CD4-positive, alpha-beta T cell (primary cell): ENCODE measurements at regions of chr19 and their contacts with region 1.

Region 1: DNA sequence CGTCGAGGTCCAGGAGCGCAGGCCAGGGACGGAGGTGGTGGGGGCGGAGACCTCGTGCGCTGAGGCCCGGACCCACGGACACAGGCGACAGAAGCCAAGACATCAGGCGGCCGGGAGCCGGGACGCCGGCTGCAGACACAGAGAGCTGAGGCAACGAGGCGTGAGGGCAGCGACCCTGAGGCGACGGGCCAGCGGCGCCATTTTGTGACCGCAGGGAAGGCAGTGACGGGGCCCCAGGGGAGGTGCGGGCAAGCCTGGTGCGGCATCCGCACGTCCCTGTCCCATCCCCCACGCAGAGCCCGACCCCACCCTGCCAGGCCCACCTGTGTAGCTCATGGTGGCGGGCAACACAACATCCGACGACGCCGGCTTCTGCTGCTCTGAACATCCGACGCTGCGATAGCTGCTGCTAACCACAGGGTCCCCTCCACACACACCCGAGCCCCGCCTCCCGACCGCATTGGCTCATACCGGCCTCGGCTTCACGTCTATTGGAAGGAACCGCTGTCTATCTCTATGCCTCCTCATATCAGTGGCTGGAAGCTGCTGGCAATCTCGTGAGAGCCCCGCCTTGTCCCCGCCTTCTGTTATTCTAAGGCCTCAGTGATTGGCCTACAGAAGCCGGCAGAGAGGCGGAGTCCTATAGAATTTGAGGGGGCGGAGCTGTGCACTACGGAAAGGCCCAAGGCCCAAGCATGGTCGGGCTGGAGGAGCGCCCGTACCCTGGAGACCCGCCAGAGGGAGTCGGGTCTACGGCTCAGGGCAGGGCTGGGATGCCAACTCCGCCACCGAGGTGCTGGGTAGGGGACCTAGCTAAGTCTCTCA is at the start of gene AKAP8L:
- DNase-seq: peak; percentile 94 to 100 (median 98)
- ATAC-seq: peak; percentile 92
- H3K4me3 ChIP-seq: peak within 1 kb of the TSS; percentile 94
- H3K4me3 Mint-ChIP-seq: peak within 1 kb of the TSS; percentile 94
- H3K27ac ChIP-seq: peak within 1 kb of the TSS; percentile 53 to 83
- H3K27ac Mint-ChIP-seq: peak within 1 kb of the TSS; percentile 92
- H3K4me1 ChIP-seq: peaks cover 40% of the 10 kb centered on the region
- H3K4me1 Mint-ChIP-seq: peaks cover 46% of the 10 kb centered on the region
- H3K27me3 ChIP-seq: no peaks in the 10 kb centered on the region
- H3K27me3 Mint-ChIP-seq: no peaks in the 10 kb centered on the region
- CTCF ChIP-seq: peak; percentile 85
- total RNA-seq, gene AKAP8L: 157 to 162 TPM

Region 2: DNA sequence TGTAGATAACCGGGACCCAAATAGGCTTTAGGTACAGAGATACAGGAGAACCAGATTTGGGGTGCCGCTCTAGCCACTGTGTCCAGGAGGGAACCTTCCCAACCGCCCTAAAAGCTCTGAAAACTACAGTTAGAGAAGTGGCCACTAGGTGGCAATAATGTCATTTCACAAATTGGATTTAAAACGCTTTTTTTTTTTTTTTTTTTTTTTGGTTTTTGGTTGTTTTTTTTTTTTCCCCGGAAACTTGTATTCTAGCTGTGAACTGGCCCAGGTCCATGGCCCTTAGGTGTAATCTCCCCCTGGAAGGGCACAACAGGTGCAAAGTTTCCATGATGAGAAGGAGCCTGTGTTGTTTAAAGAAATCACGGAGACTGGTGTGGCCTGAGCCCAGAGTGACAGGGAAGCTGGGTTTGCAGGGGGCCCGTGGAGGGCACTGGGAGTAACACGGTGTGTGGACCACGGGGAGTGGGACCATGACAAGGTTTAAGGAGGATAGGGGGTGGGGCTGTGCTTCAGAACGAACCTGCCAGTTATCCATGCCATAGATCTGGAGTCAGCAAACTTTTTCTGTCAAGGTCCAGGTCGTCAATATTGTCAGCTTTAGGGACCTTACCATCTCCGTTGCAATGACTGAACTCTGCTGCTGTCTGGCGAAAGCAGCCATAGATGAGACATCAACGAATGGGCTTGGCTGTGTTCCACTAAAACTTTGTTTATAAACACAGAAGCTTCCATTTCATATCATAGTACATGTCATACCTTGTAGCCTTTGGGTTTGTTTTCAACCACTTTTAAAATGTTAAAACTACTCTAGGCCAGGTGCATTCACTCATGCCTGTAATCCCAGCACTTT is 326.7 kb before region 1 on chr19:
- CTCF ChIA-PET with region 1: interaction called, 10 read pairs
- POLR2A ChIA-PET with region 1: interaction called, 11 read pairs
- intact Hi-C with region 1: loop called in 1 of 2 experiments (anchors 2 kb)
- DNase-seq: peak in 13 of 14 experiments; percentile 9 to 86 (median 37)
- ATAC-seq: peak; percentile 73
- H3K4me3 ChIP-seq: no peak overlapping the region
- H3K4me3 Mint-ChIP-seq: peak overlapping the region; percentile 13
- H3K27ac ChIP-seq: no peak overlapping the region
- H3K27ac Mint-ChIP-seq: peak overlapping the region; percentile 56
- H3K4me1 ChIP-seq: peaks cover 8% of the 10 kb centered on the region
- H3K4me1 Mint-ChIP-seq: peaks cover 8% of the 10 kb centered on the region
- H3K27me3 ChIP-seq: peaks cover 0 to 13% of the 10 kb centered on the region in 2 experiments
- H3K27me3 Mint-ChIP-seq: peaks cover 10% of the 10 kb centered on the region
- CTCF ChIP-seq: peak; percentile 78

Region 3: DNA sequence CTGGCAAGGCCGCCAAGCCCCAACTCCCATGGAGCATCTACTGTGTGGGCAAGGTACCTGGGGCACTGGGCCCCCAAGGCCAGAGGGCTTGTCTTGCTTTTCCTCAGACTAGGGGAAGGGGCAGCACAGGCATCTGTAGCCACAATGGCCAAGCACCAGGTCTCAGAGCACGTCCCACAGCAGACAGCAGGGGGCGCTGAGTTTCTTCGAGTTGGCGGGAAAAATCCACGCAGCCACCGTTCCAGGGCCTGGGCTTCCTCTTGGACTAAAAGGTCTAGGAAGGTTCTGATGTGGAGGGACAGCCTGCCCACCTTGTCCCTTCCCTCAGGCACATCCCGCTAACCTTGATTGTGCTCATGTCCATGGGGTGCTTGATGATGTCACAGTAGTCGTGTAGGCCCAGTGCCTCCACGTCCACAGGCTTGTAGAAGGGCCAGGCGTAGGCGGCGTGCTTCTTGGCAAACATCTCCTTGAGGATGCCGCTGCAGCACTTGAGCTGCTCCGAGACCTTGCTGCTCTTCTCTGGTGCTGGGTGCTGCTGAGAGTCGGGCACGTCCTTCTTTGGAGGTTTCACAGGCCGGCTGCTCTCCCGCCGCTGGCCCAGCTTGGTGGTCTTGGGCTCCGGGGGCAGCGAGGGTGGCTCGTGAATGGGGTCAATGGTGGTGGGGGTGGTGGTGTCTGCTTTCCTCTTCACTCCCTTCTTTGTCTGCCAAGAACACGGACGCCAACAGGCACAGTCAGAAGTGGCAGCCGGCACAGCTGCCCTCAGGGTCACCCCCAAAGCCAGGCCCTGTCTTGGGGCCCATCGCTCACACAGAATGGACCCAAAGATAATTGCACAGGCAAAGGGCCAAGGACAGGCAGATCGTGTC is 154.5 kb before region 1 on chr19:
- CTCF ChIA-PET with region 1: no interaction called
- POLR2A ChIA-PET with region 1: no interaction called
- intact Hi-C with region 1: loop called (anchors 1 to 5 kb)
- DNase-seq: peak; percentile 58 to 82 (median 66)
- ATAC-seq: peak; percentile 80
- H3K4me3 ChIP-seq: no peak overlapping the region
- H3K4me3 Mint-ChIP-seq: no peak overlapping the region
- H3K27ac ChIP-seq: no peak overlapping the region
- H3K27ac Mint-ChIP-seq: no peak overlapping the region
- H3K4me1 ChIP-seq: no peaks in the 10 kb centered on the region
- H3K4me1 Mint-ChIP-seq: peaks cover 13% of the 10 kb centered on the region
- H3K27me3 ChIP-seq: no peaks in the 10 kb centered on the region
- H3K27me3 Mint-ChIP-seq: no peaks in the 10 kb centered on the region
- CTCF ChIP-seq: peak; percentile 75

Region 4: DNA sequence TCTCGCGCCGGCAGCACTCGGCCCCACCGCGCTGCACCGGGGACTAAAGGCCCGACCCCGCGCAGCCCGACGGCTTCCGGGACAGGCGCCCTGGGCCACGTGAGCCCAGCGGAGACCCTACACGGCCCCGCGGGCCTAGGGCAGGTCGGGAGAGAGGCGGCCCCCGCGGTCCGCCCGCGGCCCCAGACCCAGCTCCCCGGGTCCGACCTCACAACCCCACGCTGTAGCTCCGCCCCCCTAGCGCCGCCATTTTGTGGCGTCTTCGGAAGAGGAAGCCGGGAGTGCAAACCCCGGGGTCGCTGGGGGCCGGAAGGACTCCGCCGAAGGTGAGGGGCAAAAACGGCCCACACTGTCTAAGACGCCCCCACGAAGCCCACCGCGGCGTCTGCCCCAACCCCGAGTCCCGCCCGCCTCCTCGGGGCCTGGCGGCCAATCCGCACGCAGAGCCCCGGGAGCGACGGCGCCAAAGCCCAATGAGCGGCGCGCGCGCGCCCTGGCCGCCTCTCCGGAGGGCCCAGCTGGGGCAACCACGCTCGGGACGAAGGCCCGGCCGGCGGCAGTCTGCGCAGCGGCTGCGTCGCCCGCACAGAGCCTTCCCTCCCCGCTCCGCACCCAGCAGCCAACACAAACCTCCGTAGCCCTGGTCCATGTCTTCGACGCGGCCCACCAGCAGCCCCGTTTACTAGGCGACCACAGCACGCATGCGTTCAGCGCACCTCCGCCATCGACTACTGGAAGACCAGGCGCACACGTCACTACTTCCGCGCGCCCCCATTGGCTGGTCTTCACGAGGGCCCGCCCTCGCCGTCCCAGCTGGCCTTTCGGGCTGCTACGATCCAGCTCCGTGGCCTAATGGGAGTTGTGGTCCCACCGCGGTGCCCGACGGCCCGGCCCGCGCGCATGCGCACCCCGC is 39.5 kb before region 1 on chr19 and contains the start of gene AKAP8:
- CTCF ChIA-PET with region 1: interaction called, 34 read pairs
- POLR2A ChIA-PET with region 1: interaction called, 208 read pairs
- intact Hi-C with region 1: loop called (anchors 1 kb)
- DNase-seq: peak; percentile 96 to 100 (median 98)
- ATAC-seq: peak; percentile 90
- H3K4me3 ChIP-seq: peak within 1 kb of the TSS; percentile 75
- H3K4me3 Mint-ChIP-seq: peak within 1 kb of the TSS; percentile 100
- H3K27ac ChIP-seq: peak within 1 kb of the TSS; percentile 96
- H3K27ac Mint-ChIP-seq: peak within 1 kb of the TSS; percentile 97
- H3K4me1 ChIP-seq: peaks cover 35% of the 10 kb centered on the region
- H3K4me1 Mint-ChIP-seq: peaks cover 48% of the 10 kb centered on the region
- H3K27me3 ChIP-seq: no peaks in the 10 kb centered on the region
- H3K27me3 Mint-ChIP-seq: no peaks in the 10 kb centered on the region
- CTCF ChIP-seq: no peak
- total RNA-seq, gene AKAP8: 87.5 to 90.1 TPM

Region 5: GRCh38 chr19:15432629-15433518 is 14.1 kb after region 1 on chr19:
- CTCF ChIA-PET with region 1: interaction called, 20 read pairs
- POLR2A ChIA-PET with region 1: interaction called, 62 read pairs
- intact Hi-C with region 1: loop called (anchors 1 to 2 kb)
- DNase-seq: peak; percentile 85 to 97 (median 92)
- ATAC-seq: peak; percentile 94
- H3K4me3 ChIP-seq: peak overlapping the region; percentile 87
- H3K4me3 Mint-ChIP-seq: peak overlapping the region; percentile 90
- H3K27ac ChIP-seq: peak overlapping the region; percentile 40 to 65
- H3K27ac Mint-ChIP-seq: peak overlapping the region; percentile 82
- H3K4me1 ChIP-seq: peaks cover 38% of the 10 kb centered on the region
- H3K4me1 Mint-ChIP-seq: peaks cover 28% of the 10 kb centered on the region
- H3K27me3 ChIP-seq: no peaks in the 10 kb centered on the region
- H3K27me3 Mint-ChIP-seq: no peaks in the 10 kb centered on the region
- CTCF ChIP-seq: no peak

Region 6: GRCh38 chr19:15466851-15467733 is 48.3 kb after region 1 on chr19:
- CTCF ChIA-PET with region 1: interaction called, 31 read pairs
- POLR2A ChIA-PET with region 1: interaction called, 76 read pairs
- intact Hi-C with region 1: loop called (anchors 2 to 5 kb)
- DNase-seq: peak in 13 of 14 experiments; percentile 31 to 87 (median 59)
- ATAC-seq: peak; percentile 43
- H3K4me3 ChIP-seq: no peak overlapping the region
- H3K4me3 Mint-ChIP-seq: peak overlapping the region; percentile 74
- H3K27ac ChIP-seq: peak overlapping the region; percentile 31 to 64
- H3K27ac Mint-ChIP-seq: peak overlapping the region; percentile 90
- H3K4me1 ChIP-seq: peaks cover 72% of the 10 kb centered on the region
- H3K4me1 Mint-ChIP-seq: peaks cover 58% of the 10 kb centered on the region
- H3K27me3 ChIP-seq: no peaks in the 10 kb centered on the region
- H3K27me3 Mint-ChIP-seq: no peaks in the 10 kb centered on the region
- CTCF ChIP-seq: no peak

Region 7: DNA sequence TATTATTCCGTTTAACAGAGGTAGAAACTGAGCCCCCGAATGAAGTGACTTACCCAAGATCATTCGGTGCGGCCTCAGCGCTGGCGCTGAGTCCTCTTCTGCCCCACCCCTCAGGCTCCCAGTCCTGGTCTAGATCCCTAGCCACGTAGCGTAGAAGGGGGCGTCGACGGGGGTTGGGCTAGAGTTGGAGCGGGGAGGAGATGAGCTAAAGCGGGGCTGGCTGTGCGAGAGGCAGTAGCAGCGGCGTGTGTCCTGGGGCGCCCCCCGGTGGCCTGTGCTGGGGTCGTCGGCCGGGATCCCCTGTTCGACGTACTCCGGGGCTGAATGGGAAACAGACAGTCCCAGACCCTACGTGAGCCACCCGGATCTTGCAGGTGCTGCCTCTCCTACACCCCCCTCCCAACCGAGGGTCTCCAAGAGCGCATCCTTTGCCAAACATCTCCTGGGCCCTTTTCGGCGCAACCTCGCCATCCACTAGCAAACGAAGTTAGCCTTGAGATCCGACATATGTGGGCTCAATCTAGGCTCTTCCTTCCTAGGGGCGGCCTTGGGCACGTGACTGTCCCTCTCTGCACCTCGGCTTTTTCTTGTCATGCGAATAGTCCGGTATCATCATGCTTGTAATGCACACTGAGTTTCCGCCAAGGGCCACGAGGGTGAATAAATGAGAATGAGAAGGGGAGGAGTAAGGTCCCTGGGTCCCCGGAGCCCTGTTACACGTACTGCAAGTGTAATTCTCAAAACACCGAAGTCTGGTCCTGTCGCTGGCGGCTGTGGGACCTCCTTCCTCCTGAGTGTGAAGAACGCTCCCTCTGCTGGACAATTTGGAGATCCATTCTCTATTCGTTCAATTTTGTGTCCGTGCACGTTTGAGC is 137.2 kb after region 1 on chr19:
- CTCF ChIA-PET with region 1: interaction called, 105 read pairs
- POLR2A ChIA-PET with region 1: interaction called, 99 read pairs
- intact Hi-C with region 1: loop called (anchors 1 kb)
- DNase-seq: peak; percentile 92 to 99 (median 96)
- ATAC-seq: peak; percentile 86
- H3K4me3 ChIP-seq: peak overlapping the region; percentile 60
- H3K4me3 Mint-ChIP-seq: peak overlapping the region; percentile 83
- H3K27ac ChIP-seq: peak overlapping the region; percentile 55 to 73
- H3K27ac Mint-ChIP-seq: peak overlapping the region; percentile 83
- H3K4me1 ChIP-seq: peaks cover 31% of the 10 kb centered on the region
- H3K4me1 Mint-ChIP-seq: peaks cover 16% of the 10 kb centered on the region
- H3K27me3 ChIP-seq: peaks cover 0 to 3% of the 10 kb centered on the region in 2 experiments
- H3K27me3 Mint-ChIP-seq: peaks cover 4% of the 10 kb centered on the region
- CTCF ChIP-seq: peak; percentile 81